CD4-positive, alpha-beta memory T cell (primary cell): ENCODE measurements at regions of chr17 and their contacts with region 1.

Region 1: GRCh38 chr17:40417609-40418427 is at the start of gene TOP2A:
- DNase-seq: peak; percentile 98 to 99 (median 98)
- H3K4me3 ChIP-seq: peak within 1 kb of the TSS; percentile 77 to 91
- H3K4me3 Mint-ChIP-seq: peak within 1 kb of the TSS; percentile 90 to 97 (median 95)
- H3K27ac ChIP-seq: peak within 1 kb of the TSS; percentile 49
- H3K27ac Mint-ChIP-seq: peak within 1 kb of the TSS; percentile 69 to 97 (median 93)
- H3K4me1 ChIP-seq: peaks cover 37% of the 10 kb centered on the region
- H3K4me1 Mint-ChIP-seq: peaks cover 15 to 35% (median 28%) of the 10 kb centered on the region in 4 donors
- H3K27me3 ChIP-seq: no peaks in the 10 kb centered on the region
- H3K27me3 Mint-ChIP-seq: no peaks in the 10 kb centered on the region
- total RNA-seq, gene TOP2A: 0.47 to 1.1 TPM

Region 2: GRCh38 chr17:40209404-40210093 is 208.3 kb before region 1 on chr17:
- CTCF ChIA-PET with region 1: no interaction called
- POLR2A ChIA-PET with region 1: no interaction called
- intact Hi-C with region 1: loop called (anchors 10 kb)
- DNase-seq: no peak
- H3K4me3 ChIP-seq: no peak overlapping the region
- H3K4me3 Mint-ChIP-seq: no peak overlapping the region
- H3K27ac ChIP-seq: no peak overlapping the region
- H3K27ac Mint-ChIP-seq: no peak overlapping the region
- H3K4me1 ChIP-seq: no peaks in the 10 kb centered on the region
- H3K4me1 Mint-ChIP-seq: no peaks in the 10 kb centered on the region
- H3K27me3 ChIP-seq: no peaks in the 10 kb centered on the region
- H3K27me3 Mint-ChIP-seq: peaks cover 0 to 1% of the 10 kb centered on the region in 2 donors

Region 3: DNA sequence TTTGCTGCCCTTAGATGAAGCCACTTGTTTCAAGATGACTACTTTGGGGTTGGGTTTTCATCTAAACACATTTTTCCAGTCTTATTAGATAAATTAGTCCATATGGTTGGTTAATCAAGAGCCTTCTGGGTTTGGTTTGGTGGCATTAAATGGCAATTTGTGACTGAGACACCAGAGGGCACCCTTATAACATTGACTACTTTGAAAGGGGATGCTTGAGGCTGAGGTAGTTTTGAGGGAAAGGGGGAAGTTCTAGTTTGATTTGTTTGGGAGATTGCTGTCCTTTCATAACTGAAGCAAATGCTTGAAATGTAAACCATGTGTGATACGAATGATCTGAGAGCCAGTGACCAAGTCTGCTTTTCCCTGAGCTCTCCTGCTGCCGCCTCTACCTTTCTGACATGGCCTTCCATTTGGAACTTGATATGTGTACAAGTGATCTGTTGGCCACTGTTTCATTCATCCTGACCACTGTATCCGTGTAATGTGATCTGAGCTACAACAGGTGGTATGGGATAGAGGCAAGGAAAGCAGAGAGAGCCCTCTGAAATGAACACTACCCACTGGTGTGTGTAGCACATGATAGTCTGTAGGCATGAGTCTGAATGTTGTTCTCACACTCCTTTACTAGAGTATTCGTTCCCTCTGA is 114.7 kb before region 1 on chr17:
- CTCF ChIA-PET with region 1: interaction called, 16 read pairs
- POLR2A ChIA-PET with region 1: interaction called, 6 read pairs
- intact Hi-C with region 1: loop called (anchors 1 kb)
- DNase-seq: peak; percentile 62 to 70 (median 66)
- H3K4me3 ChIP-seq: no peak overlapping the region
- H3K4me3 Mint-ChIP-seq: no peak overlapping the region
- H3K27ac ChIP-seq: no peak overlapping the region
- H3K27ac Mint-ChIP-seq: peak overlapping the region in 5 of 7 donors; percentile 2 to 53 (median 13)
- H3K4me1 ChIP-seq: peaks cover 37% of the 10 kb centered on the region
- H3K4me1 Mint-ChIP-seq: peaks cover 14 to 17% (median 15%) of the 10 kb centered on the region in 4 donors
- H3K27me3 ChIP-seq: no peaks in the 10 kb centered on the region
- H3K27me3 Mint-ChIP-seq: no peaks in the 10 kb centered on the region

Region 4: DNA sequence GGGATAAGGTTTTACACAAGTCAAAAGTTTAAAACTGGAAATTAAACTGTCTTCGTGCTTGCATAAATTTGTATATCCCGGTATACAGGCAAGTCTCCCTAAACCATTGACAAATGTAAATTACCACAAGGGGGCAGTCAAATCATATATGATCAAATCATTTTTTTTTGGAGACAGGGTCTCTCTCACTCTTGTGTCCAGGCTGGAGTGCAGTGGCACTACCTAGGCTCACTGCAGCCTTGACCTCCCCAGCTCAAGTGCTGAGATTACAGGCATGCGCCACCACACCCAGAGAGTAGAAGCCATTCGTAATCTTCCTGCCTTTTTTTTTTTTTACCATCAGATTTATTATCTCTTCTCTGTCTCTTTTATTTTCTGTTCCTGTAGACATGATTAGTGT is 18.6 kb before region 1 on chr17:
- CTCF ChIA-PET with region 1: interaction called, 43 read pairs
- POLR2A ChIA-PET with region 1: interaction called, 4 read pairs
- intact Hi-C with region 1: loop called (anchors 1 kb)
- DNase-seq: peak in 4 of 5 donors; percentile 40 to 66 (median 57)
- H3K4me3 ChIP-seq: no peak overlapping the region
- H3K4me3 Mint-ChIP-seq: no peak overlapping the region
- H3K27ac ChIP-seq: no peak overlapping the region
- H3K27ac Mint-ChIP-seq: peak overlapping the region in 2 of 7 donors; percentile 82 to 84
- H3K4me1 ChIP-seq: peaks cover 21% of the 10 kb centered on the region
- H3K4me1 Mint-ChIP-seq: peaks cover 16 to 24% (median 21%) of the 10 kb centered on the region in 4 donors
- H3K27me3 ChIP-seq: no peaks in the 10 kb centered on the region
- H3K27me3 Mint-ChIP-seq: no peaks in the 10 kb centered on the region

Region 5: GRCh38 chr17:40564883-40565768 is 147.3 kb after region 1 on chr17 and contains the start of gene CCR7:
- CTCF ChIA-PET with region 1: interaction called, 14 read pairs
- POLR2A ChIA-PET with region 1: interaction called, 23 read pairs
- intact Hi-C with region 1: loop called (anchors 5 kb)
- DNase-seq: peak; percentile 83 to 94 (median 85)
- H3K4me3 ChIP-seq: peak within 1 kb of the TSS; percentile 94 to 96
- H3K4me3 Mint-ChIP-seq: peak within 1 kb of the TSS; percentile 88 to 98 (median 96)
- H3K27ac ChIP-seq: peak within 1 kb of the TSS; percentile 94
- H3K27ac Mint-ChIP-seq: peak within 1 kb of the TSS; percentile 95 to 100 (median 99)
- H3K4me1 ChIP-seq: peaks cover 73% of the 10 kb centered on the region
- H3K4me1 Mint-ChIP-seq: peaks cover 38 to 83% (median 60%) of the 10 kb centered on the region in 4 donors
- H3K27me3 ChIP-seq: no peaks in the 10 kb centered on the region
- H3K27me3 Mint-ChIP-seq: no peaks in the 10 kb centered on the region
- total RNA-seq, gene CCR7: 268 to 269 TPM